Activated T-helper 1 cell treated with anti-CD3 and anti-CD28 coated beads, Interleukin-12 subunit alpha, Interleukin-12 subunit beta, Interleukin-2, Interleukin-4 antibody, amounts not matched to agents 30 ng/mL and 10 ng/mL and 1 ng/mL, durations not matched to agents 14 hours and 24 hours and 36 hours (primary cell): ENCODE measurements at regions of chr18 and their contacts with region 1.

Region 1: DNA sequence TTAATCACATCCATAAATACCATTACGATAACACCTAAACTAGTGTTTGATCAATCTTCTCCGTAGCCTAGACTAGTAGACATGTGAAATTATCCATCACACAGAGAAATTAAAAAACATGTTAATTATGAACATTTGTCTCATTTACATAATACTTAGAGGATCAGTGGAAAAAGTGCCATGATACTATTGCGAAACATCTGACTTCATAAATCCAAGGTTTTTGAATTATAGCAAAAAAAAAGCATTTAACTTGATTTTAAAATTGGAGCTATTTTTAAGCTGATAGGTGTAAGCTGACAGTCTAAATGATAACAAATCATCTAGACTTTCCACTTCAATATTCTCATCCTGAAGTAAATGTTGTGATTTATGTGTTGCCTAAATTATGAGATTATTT is 51.6 kb downstream of the CBLN2 start:
- DNase-seq: no peak
- H3K4me3 Mint-ChIP-seq: no peak overlapping the region
- H3K27ac Mint-ChIP-seq: no peak overlapping the region
- H3K4me1 Mint-ChIP-seq: no peaks in the 10 kb centered on the region
- H3K27me3 Mint-ChIP-seq: no peaks in the 10 kb centered on the region

Region 2: DNA sequence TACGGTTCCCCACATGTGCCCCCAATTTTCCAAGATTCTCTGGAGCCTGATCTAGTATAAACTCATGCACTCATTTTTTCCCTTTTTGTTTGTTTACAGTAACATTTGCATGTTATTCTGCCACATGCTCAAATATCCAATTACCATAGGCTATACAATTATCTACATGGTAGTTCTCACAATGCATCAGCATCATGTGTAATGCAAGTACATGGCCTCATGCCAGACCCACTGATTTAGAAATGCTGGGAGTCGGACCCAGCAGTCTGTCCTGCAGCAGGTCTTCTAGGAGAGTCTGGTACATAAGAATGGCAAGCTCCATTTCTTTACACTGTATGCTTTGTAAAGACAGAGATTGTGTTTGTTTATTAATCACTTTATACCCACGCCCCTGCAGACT is 56.1 kb before region 1 on chr18:
- intact Hi-C with region 1: loop called (anchors 10 kb)
- DNase-seq: no peak
- H3K4me3 Mint-ChIP-seq: no peak overlapping the region
- H3K27ac Mint-ChIP-seq: no peak overlapping the region
- H3K4me1 Mint-ChIP-seq: no peaks in the 10 kb centered on the region
- H3K27me3 Mint-ChIP-seq: no peaks in the 10 kb centered on the region

Region 3: GRCh38 chr18:72530622-72531021 is 38.1 kb after region 1 on chr18:
- intact Hi-C with region 1: no loop called
- DNase-seq: no peak
- H3K4me3 Mint-ChIP-seq: no peak overlapping the region
- H3K27ac Mint-ChIP-seq: no peak overlapping the region
- H3K4me1 Mint-ChIP-seq: no peaks in the 10 kb centered on the region
- H3K27me3 Mint-ChIP-seq: no peaks in the 10 kb centered on the region

Region 4: GRCh38 chr18:73093687-73094250 is 601.3 kb after region 1 on chr18:
- intact Hi-C with region 1: no loop called
- DNase-seq: no peak
- H3K4me3 Mint-ChIP-seq: no peak overlapping the region
- H3K27ac Mint-ChIP-seq: no peak overlapping the region
- H3K4me1 Mint-ChIP-seq: no peaks in the 10 kb centered on the region
- H3K27me3 Mint-ChIP-seq: no peaks in the 10 kb centered on the region